ENCODE measurements at regions of chr2 and their contacts with region 1.

Region 1: DNA sequence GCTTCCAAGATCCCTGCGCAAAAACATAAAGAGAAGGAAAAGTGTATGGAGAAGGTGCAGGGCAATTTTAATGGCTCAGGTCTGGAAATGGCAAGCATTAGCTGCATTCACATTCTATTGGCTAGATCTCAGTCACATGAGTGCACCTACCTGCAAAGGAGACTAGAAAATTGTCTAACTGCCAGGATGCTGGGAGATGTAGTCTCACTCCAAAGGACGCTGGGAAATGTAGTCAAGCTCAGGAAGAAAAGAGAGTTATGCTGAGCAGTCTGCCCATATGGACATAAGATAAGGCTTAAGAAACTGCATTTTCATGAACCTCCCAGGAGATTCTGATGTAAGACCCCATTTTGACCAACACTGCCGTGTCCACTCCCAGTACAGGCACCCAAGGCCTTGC is 9.5 kb upstream of the KLHL29 start:
- DNase-seq: no peak
- ATAC-seq: peak; percentile 77
- H3K4me3 ChIP-seq: no peak overlapping the region
- H3K27ac ChIP-seq: no peak overlapping the region
- H3K4me1 ChIP-seq: peaks cover 30% of the 10 kb centered on the region
- H3K27me3 ChIP-seq: no peaks in the 10 kb centered on the region
- CTCF ChIP-seq: no peak
- EP300 ChIP-seq: no peak
- POLR2A ChIP-seq: no peak
- RAD21 ChIP-seq: no peak

Region 2: GRCh38 chr2:23351388-23352141 is 23.9 kb before region 1 on chr2:
- CTCF ChIA-PET with region 1: interaction called, 10 read pairs
- POLR2A ChIA-PET with region 1: no interaction called
- RAD21 ChIA-PET with region 1: interaction called, 3 read pairs
- SMC1A ChIA-PET with region 1: interaction called, 4 read pairs
- in situ Hi-C with region 1: no loop called
- intact Hi-C with region 1: no loop called
- DNase-seq: no peak
- ATAC-seq: peak; percentile 99
- H3K4me3 ChIP-seq: no peak overlapping the region
- H3K27ac ChIP-seq: no peak overlapping the region
- H3K4me1 ChIP-seq: peaks cover 11% of the 10 kb centered on the region
- H3K27me3 ChIP-seq: no peaks in the 10 kb centered on the region
- CTCF ChIP-seq: peak; percentile 79 to 92 (median 83)
- EP300 ChIP-seq: no peak
- POLR2A ChIP-seq: no peak
- RAD21 ChIP-seq: peak; percentile 69

Measured in GM12878 (cell line).